ENCODE measurements at regions of chr6 and their contacts with region 1.

Region 1: GRCh38 chr6:3270258-3270657 is 11.5 kb downstream of the PSMG4 start:
- DNase-seq: no peak
- H3K4me3 ChIP-seq: no peak overlapping the region
- CTCF ChIP-seq: no peak

Region 2: GRCh38 chr6:2952557-2953095 is 317.6 kb before region 1 on chr6:
- in situ Hi-C with region 1: no loop called
- DNase-seq: peak; percentile 68
- H3K4me3 ChIP-seq: no peak overlapping the region
- CTCF ChIP-seq: peak; percentile 100

Region 3: GRCh38 chr6:3231247-3232016 is 38.8 kb before region 1 on chr6:
- in situ Hi-C with region 1: no loop called
- DNase-seq: peak; percentile 42
- H3K4me3 ChIP-seq: peak overlapping the region; percentile 64
- CTCF ChIP-seq: no peak

Region 4: DNA sequence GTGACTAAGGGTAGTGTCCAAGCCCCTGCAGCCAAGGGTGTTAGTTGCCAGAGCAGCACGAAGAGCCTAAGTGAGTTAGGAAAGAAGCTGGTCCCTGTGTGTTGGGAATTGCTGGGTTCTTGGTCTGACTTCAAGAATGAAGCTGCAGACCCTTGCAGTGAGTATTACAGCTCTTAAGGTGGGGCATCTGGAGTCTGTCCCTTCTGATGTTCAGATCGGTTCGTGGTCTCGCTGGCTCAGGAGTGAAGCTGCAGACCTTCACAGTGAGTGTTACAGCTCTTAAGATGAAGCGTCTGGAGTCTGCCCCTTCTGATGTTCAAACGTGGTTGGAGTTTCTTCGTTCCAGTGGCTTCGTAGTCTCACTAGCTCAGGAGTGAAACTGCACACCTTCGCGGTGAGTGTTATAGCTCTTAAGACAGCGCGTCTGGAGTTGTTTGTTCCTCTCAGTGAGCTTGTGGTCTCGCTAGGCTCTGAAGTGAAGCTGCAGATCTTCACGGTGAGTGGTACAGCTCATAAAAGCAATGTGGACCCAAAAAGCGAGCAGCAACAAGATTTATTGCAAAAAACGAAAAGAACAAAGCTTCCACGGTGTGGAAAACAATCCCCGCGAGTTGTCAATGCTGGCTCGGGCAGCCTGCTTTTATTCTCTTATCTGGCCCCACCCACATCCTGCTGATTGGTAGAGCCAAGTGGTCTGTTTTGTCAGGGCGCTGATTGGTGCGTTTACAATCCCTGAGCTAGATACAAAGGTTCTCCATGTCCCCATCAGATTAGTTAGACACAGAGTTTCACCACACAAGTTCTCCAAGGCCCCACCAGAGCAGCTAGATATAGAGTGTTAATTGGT is 449.4 kb after region 1 on chr6:
- in situ Hi-C with region 1: loop called (anchors 5 kb)
- DNase-seq: no peak
- H3K4me3 ChIP-seq: no peak overlapping the region
- CTCF ChIP-seq: no peak

Measured in astrocyte of the cerebellum (primary cell).